ENCODE measurements at regions of chr2 and their contacts with region 1.

Region 1: DNA sequence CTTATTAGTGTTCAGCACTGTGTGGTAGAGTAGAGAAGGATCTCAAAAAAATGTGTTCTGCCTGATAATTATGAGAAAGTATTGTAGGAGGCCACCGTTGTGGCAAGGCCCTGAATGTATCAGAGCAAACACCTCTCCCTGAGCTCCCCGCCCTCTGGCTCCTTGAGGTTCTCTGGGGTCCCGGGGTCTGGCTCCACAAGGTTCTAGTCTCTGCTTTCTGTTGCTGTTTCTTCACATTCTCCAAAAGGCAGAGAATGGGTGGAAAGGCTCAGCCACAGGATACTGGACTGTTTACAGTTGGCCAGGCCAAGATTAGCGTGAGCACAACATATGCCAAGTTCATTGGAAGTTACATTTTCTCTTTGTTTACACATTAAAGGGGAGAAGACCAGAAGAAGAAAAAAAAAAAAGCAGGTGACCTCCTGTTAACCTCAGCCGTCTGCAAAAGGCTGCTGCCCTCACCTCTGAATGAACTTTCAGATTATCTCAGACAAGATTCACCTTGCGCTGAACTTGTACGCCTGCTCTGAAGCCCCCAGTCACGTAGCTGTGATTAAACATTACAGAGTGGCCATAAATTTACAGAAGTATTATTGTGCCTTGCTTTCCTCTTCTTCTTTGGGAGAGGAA is 56.6 kb upstream of the CYP26B1 start:
- DNase-seq: no peak
- H3K4me3 ChIP-seq: no peak overlapping the region
- H3K27ac ChIP-seq: no peak overlapping the region
- H3K4me1 ChIP-seq: peaks cover 15% of the 10 kb centered on the region
- H3K27me3 ChIP-seq: no peaks in the 10 kb centered on the region
- CTCF ChIP-seq: no peak
- POLR2A ChIP-seq: no peak

Region 2: DNA sequence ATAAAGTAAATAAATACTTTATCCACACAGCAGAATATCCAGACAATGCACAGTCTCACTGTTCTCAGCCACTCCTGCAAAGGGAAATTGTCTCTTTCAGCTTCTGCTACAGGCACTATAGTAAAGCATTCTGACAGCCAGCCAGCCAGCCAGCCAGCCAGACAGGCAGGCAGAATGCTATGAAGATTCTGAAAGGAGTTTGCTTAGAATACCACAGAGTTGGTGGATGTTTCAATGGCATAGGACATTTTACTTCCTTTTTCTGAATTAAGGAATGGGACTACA is 59.4 kb after region 1 on chr2:
- intact Hi-C with region 1: no loop called
- DNase-seq: no peak
- H3K4me3 ChIP-seq: no peak overlapping the region
- H3K27ac ChIP-seq: no peak overlapping the region
- H3K4me1 ChIP-seq: no peaks in the 10 kb centered on the region
- H3K27me3 ChIP-seq: no peaks in the 10 kb centered on the region
- CTCF ChIP-seq: no peak
- POLR2A ChIP-seq: no peak

Region 3: GRCh38 chr2:72439892-72440291 is 235.6 kb after region 1 on chr2:
- intact Hi-C with region 1: loop called (anchors 10 kb)
- DNase-seq: no peak
- H3K4me3 ChIP-seq: no peak overlapping the region
- H3K27ac ChIP-seq: no peak overlapping the region
- H3K4me1 ChIP-seq: no peaks in the 10 kb centered on the region
- H3K27me3 ChIP-seq: no peaks in the 10 kb centered on the region
- CTCF ChIP-seq: no peak
- POLR2A ChIP-seq: no peak

Region 4: DNA sequence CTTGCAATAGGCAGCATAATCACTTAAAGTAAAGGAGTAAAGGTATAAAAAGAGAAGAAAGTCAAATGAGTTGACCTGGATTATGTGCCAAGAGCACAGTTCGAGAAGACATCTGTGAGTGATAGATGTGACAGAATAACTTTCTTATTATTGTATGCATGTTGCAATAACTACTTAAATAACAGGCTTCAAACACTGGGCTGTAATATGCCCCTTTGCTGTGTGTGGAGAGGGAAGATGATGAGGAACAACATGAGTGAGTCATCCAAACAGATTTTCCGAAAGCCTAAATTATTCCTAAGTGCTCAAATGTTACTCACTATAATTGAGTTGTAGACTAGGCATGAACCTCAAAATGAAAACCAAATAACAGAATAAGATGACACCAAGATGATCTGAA is 293.5 kb after region 1 on chr2:
- intact Hi-C with region 1: no loop called
- DNase-seq: no peak
- H3K4me3 ChIP-seq: no peak overlapping the region
- H3K27ac ChIP-seq: no peak overlapping the region
- H3K4me1 ChIP-seq: no peaks in the 10 kb centered on the region
- H3K27me3 ChIP-seq: no peaks in the 10 kb centered on the region
- CTCF ChIP-seq: no peak
- POLR2A ChIP-seq: no peak

Measured in vagina (tissue), 2 donors.